MCF 10A (cell line): ENCODE measurements at regions of chr7 and their contacts with region 1.

Region 1: GRCh38 chr7:134016223-134016941 is 110.8 kb upstream of the LRGUK start:
- DNase-seq: peak; percentile 33
- H3K4me3 Mint-ChIP-seq: no peak overlapping the region
- H3K27ac Mint-ChIP-seq: no peak overlapping the region
- H3K4me1 Mint-ChIP-seq: no peaks in the 10 kb centered on the region
- H3K27me3 Mint-ChIP-seq: no peaks in the 10 kb centered on the region
- CTCF ChIP-seq: peak; percentile 59

Region 2: GRCh38 chr7:132318352-132319318 is 1697.7 kb before region 1 on chr7:
- CTCF ChIA-PET with region 1: no interaction called
- POLR2A ChIA-PET with region 1: no interaction called
- intact Hi-C with region 1: loop called (anchors 5 kb)
- DNase-seq: peak; percentile 79
- H3K4me3 Mint-ChIP-seq: no peak overlapping the region
- H3K27ac Mint-ChIP-seq: no peak overlapping the region
- H3K4me1 Mint-ChIP-seq: no peaks in the 10 kb centered on the region
- H3K27me3 Mint-ChIP-seq: peaks cover 41% of the 10 kb centered on the region
- CTCF ChIP-seq: peak; percentile 87